Mammary epithelial cell (primary cell): ENCODE measurements at regions of chr9 and their contacts with region 1.

Region 1: GRCh38 chr9:26205261-26205660 is 527.0 kb upstream of the TUSC1 start:
- DNase-seq: no peak
- H3K4me3 ChIP-seq: no peak overlapping the region
- H3K27ac ChIP-seq: no peak overlapping the region
- H3K4me1 ChIP-seq: no peaks in the 10 kb centered on the region
- H3K27me3 ChIP-seq: no peaks in the 10 kb centered on the region
- CTCF ChIP-seq: no peak

Region 2: GRCh38 chr9:26163931-26164330 is 41.3 kb before region 1 on chr9:
- CTCF ChIA-PET with region 1: no interaction called
- dilution Hi-C with region 1: loop called (anchors 5 kb)
- in situ Hi-C with region 1: no loop called
- intact Hi-C with region 1: no loop called
- DNase-seq: no peak
- H3K4me3 ChIP-seq: no peak overlapping the region
- H3K27ac ChIP-seq: no peak overlapping the region
- H3K4me1 ChIP-seq: no peaks in the 10 kb centered on the region
- H3K27me3 ChIP-seq: no peaks in the 10 kb centered on the region
- CTCF ChIP-seq: no peak

Region 3: GRCh38 chr9:26880262-26880661 is 675.0 kb after region 1 on chr9:
- CTCF ChIA-PET with region 1: no interaction called
- dilution Hi-C with region 1: no loop called
- in situ Hi-C with region 1: no loop called
- intact Hi-C with region 1: no loop called
- DNase-seq: no peak
- H3K4me3 ChIP-seq: no peak overlapping the region
- H3K27ac ChIP-seq: no peak overlapping the region
- H3K4me1 ChIP-seq: no peaks in the 10 kb centered on the region
- H3K27me3 ChIP-seq: no peaks in the 10 kb centered on the region
- CTCF ChIP-seq: no peak